Right cardiac atrium (tissue), 5 donors: ENCODE measurements at regions of chr1 and their contacts with region 1.

Region 1: DNA sequence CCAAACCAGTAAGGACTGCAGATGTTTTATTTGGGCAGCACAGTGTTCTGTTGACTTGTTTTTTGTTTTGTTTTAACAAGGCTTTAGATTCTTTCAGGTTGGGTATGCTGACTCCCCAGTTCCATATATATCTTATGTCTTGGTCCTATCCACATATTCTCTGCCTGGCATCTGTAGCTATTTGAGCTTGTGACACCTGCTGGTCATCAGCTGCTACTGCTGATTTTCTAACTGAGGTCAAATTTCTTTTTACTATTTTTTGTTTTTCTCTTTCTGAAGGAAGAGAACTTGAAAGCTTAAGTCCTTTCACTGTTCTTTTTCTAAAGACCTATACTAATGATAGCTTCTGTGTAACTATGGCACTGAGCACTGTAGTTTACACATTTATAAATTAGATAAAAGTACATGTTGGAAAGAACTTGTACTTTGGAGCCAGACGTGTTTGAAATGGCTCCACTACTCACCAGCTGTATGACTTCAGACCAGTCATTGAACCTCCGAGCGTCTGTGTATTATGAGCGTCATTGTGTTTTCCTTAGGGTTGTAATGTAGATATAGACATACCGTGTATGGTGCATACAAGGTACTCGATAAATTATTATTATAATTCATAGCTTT is 109.4 kb downstream of the NRDC start:
- DNase-seq: no peak
- ATAC-seq: peak; percentile 69 to 72
- H3K4me3 ChIP-seq: no peak overlapping the region
- H3K27ac ChIP-seq: no peak overlapping the region
- H3K4me1 ChIP-seq: peaks cover 2% of the 10 kb centered on the region
- H3K27me3 ChIP-seq: no peaks in the 10 kb centered on the region

Region 2: DNA sequence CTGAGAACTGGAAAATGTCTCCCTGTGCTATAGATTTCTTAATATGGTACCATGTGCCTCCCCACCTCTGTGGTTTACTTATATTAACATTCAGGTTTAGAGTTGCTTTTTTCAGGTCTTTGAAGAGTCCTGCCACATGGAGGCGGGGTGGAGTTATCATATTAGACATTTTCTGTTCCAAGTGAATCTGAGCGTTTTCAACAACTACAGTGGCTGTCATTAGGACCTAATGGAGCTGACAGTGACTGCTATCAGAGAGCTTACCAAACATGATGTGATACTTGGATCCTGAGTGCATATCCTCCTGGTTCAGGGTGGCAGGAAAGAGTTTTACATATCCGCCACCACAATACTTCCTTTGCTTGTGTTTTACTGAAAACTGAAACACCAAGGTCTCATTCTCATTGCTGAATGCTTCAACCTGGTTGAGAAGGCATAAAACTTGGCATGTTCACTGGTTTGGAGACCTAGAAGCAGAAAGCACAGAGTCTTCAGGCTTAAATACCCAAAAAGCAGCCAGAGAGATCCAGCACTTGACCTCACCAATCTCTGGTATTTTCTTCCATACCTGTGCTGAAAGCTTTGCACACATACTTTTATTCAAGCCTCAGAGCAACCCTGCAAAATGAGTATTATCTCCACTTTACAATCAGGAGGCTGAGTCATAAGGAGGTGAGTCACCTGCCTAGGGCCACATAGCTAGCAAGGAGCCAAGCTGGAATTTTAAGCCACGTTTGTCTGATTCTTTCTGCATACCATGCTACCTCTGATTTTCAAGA is 199.6 kb before region 1 on chr1:
- intact Hi-C with region 1: loop called in 1 of 4 experiments (anchors 10 kb)
- DNase-seq: peak in 1 of 3 donors; percentile 65
- ATAC-seq: peak; percentile 52
- H3K4me3 ChIP-seq: no peak overlapping the region
- H3K27ac ChIP-seq: peak overlapping the region; percentile 8
- H3K4me1 ChIP-seq: peaks cover 11% of the 10 kb centered on the region
- H3K27me3 ChIP-seq: no peaks in the 10 kb centered on the region

Region 3: GRCh38 chr1:51627678-51628077 is 141.4 kb before region 1 on chr1:
- intact Hi-C with region 1: loop called in 2 of 4 experiments (anchors 5 to 10 kb)
- DNase-seq: no peak
- ATAC-seq: peak in 1 of 2 donors; percentile 31
- H3K4me3 ChIP-seq: no peak overlapping the region
- H3K27ac ChIP-seq: no peak overlapping the region
- H3K4me1 ChIP-seq: peaks cover 6% of the 10 kb centered on the region
- H3K27me3 ChIP-seq: no peaks in the 10 kb centered on the region

Region 4: GRCh38 chr1:51636764-51637522 is 132.1 kb before region 1 on chr1:
- intact Hi-C with region 1: loop called in 2 of 4 experiments (anchors 5 to 10 kb)
- DNase-seq: peak in 1 of 3 donors; percentile 39
- ATAC-seq: peak; percentile 35 to 82
- H3K4me3 ChIP-seq: no peak overlapping the region
- H3K27ac ChIP-seq: no peak overlapping the region
- H3K4me1 ChIP-seq: peaks cover 7% of the 10 kb centered on the region
- H3K27me3 ChIP-seq: no peaks in the 10 kb centered on the region